HepG2 (cell line): ENCODE measurements at regions of chr5 and their contacts with region 1.

Region 1: DNA sequence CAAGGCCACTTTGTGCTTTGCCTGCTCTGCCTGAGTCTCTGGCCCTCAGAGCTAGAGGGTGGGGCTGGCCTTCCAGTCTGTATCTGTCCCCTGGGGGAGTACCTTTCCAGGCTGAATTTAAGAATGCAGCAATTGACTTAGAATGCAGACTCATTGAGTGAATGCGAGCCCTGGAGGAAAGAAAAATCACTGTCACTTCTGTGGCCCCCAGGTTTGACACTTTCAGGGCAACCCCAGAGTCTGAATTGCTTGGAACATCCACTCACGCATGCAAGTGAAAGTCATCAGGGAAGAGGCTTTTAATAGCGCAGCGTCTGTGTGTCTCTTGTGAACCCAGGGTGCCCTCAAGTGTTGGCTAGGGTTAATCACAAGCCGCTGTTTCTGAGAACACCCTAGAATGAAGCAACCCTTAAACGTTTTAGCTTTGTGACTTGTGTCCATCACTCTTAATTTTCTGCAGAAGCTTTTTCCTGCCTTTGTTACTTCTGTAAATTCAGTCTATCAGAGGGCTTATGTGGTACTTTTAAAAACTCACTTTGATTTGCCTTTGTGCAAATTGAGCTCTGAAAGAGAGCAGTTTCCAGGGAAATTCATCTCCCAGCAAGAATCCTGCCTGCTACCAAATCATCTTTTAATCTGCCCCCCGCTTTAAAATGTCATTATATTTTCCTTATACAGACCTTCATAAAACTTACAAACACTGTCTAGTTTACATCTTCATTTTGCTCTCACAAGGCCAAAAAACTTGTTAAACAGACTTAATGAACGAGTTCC is 146.8 kb upstream of the IQGAP2 start:
- DNase-seq: peak; percentile 63
- ATAC-seq: peak; percentile 98
- H3K4me3 ChIP-seq: no peak overlapping the region
- H3K27ac ChIP-seq: no peak overlapping the region
- H3K4me1 ChIP-seq: no peaks in the 10 kb centered on the region
- H3K27me3 ChIP-seq: peaks cover 1 to 7% of the 10 kb centered on the region in 2 experiments; a peak in 2 of 5 replicates
- CTCF ChIP-seq: peak; percentile 87
- EP300 ChIP-seq: no peak
- POLR2A ChIP-seq: no peak
- RAD21 ChIP-seq: peak; percentile 79; the same call in 1 of the 2 replicates

Region 2: DNA sequence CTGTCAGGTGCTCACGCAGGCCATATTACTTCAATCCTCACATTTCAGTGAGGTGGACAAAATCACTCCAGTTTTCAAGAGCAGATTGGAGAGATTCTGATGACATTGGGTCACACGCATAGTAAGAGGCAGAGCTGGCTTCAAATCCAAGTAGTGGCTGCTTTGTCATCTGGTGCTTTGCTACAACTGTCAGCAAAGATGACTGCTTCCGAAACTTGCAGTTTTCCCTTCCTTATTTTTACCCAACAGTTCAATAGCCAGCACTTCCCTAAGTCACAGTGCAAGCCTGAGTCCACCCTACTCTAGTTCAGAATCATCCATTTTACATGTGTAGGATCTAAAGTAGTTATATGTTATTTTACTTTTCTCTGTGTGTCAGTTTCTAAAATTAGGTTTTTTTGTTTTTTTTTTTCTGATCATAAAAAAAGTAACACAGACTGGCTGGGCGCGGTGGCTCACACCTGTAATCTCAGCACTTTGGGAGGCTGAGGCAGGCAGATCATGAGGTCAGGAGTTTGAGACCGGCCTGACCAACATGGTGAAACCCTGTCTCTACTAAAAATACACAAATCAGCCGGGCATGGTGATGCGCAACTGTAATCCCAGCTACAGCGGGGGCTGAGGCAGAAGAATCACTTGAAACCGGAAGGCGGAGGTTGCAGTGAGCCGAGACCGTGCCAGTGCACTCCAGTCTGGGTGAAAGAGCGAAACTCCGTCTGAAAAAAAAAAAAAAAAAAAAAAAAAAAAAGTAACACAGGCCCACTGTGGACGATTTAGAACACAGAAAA is 595.4 kb before region 1 on chr5:
- CTCF ChIA-PET with region 1: no interaction called
- POLR2A ChIA-PET with region 1: no interaction called
- in situ Hi-C with region 1: no loop called
- intact Hi-C with region 1: no loop called
- DNase-seq: no peak
- ATAC-seq: no peak
- H3K4me3 ChIP-seq: no peak overlapping the region
- H3K27ac ChIP-seq: no peak overlapping the region
- H3K4me1 ChIP-seq: no peaks in the 10 kb centered on the region
- H3K27me3 ChIP-seq: peaks cover 0 to 8% of the 10 kb centered on the region in 2 experiments; a peak in 1 of 5 replicates
- CTCF ChIP-seq: no peak
- EP300 ChIP-seq: no peak
- POLR2A ChIP-seq: no peak
- RAD21 ChIP-seq: no peak

Region 3: DNA sequence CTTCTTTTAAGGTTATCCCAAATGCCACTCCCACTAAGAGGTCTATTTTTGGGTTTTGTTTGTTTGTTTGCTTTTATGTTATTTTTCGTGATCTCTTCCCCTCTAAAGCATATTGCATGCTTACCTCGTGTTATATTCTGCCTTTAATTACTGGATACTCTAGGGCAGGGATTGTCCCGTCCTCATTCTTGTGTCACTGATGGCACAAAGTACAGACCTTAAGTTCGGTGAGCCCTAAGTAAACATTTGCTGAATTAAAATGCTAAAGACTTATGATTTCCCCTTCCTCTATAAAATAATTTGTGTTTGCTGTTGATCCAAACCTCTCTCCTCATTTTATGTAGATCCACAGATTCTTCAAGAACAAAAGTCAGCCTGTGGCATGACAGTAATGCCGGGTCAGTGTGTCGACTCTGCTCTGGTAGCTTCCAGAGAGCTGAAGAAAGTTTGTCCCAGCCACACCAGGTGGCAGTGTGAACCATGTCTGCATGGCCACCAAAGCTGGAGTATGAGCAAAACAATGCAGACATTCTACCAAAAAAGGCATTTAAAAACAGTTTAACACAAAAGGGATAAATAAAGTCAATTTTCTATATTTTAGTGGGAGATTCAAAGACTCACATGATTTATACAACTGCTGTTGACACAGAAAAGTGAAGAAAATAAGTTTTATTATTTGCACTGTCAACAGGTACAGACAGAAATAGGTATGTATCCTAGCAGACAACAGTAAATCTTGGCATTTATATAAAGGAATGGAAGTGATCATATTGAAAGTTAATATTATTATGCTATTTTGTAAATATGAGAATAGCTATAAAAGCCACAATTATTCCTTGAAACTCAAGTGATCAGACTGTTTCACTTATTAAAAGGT is 521.2 kb before region 1 on chr5:
- CTCF ChIA-PET with region 1: interaction called, 5 read pairs
- POLR2A ChIA-PET with region 1: no interaction called
- in situ Hi-C with region 1: loop called (anchors 10 kb)
- intact Hi-C with region 1: loop called (anchors 1 kb)
- DNase-seq: peak; percentile 43
- ATAC-seq: peak; percentile 99
- H3K4me3 ChIP-seq: no peak overlapping the region
- H3K27ac ChIP-seq: no peak overlapping the region
- H3K4me1 ChIP-seq: 0 out of 2 replicates have a peak, but pooled peaks cover 5% of the 10 kb centered on the region
- H3K27me3 ChIP-seq: no peaks in the 10 kb centered on the region
- CTCF ChIP-seq: peak; percentile 82
- EP300 ChIP-seq: no peak
- POLR2A ChIP-seq: no peak
- RAD21 ChIP-seq: peak; percentile 21; the same call in 1 of the 2 replicates

Region 4: DNA sequence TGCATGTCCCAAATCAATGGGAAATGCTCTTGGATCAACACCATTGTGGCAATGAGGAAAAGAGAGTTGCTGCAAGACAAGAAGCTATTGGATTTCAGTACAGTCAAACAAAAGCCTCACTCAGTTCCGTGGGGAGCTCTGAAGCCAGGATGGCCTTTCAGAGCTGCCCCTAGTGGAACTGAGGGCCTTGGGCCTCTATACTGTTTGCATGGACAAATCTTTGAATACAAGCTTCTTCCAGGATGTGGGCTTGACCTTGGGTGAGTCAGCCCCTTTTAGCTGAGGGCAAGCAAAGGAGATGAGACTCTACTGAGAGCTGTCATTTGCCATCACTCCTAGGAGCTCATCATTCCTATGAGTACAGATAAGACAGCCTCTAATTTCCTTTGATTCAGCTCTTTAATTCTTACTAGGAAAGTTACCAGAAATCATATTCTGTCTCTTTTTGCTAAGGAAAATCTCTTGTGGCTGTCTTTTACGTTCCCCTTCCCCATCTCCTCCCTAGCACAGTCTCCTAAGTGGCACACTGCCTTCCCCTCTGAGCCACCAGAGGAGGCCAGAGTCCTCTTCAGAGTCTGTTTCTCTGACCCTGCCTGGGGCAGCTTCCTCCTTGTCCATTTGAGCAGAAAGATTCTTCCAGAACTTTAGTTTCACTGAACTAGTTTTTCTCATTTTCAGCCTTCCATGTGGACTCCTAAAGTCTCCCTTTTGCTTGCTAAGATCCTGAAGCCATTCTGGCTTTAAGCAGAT is 370.3 kb before region 1 on chr5:
- CTCF ChIA-PET with region 1: no interaction called
- POLR2A ChIA-PET with region 1: no interaction called
- in situ Hi-C with region 1: no loop called
- intact Hi-C with region 1: loop called (anchors 5 kb)
- DNase-seq: no peak
- ATAC-seq: peak; percentile 77
- H3K4me3 ChIP-seq: no peak overlapping the region
- H3K27ac ChIP-seq: no peak overlapping the region
- H3K4me1 ChIP-seq: no peaks in the 10 kb centered on the region
- H3K27me3 ChIP-seq: no peaks in the 10 kb centered on the region
- CTCF ChIP-seq: peak; percentile 62
- EP300 ChIP-seq: no peak
- POLR2A ChIP-seq: no peak
- RAD21 ChIP-seq: no peak

Region 5: GRCh38 chr5:76016258-76016657 is 240.0 kb before region 1 on chr5:
- CTCF ChIA-PET with region 1: no interaction called
- POLR2A ChIA-PET with region 1: no interaction called
- in situ Hi-C with region 1: no loop called
- intact Hi-C with region 1: loop called (anchors 1 kb)
- DNase-seq: no peak
- ATAC-seq: no peak
- H3K4me3 ChIP-seq: no peak overlapping the region
- H3K27ac ChIP-seq: no peak overlapping the region
- H3K4me1 ChIP-seq: no peaks in the 10 kb centered on the region
- H3K27me3 ChIP-seq: peaks cover 0 to 5% of the 10 kb centered on the region in 2 experiments; a peak in 1 of 5 replicates
- CTCF ChIP-seq: 0 out of 2 replicates have a peak, but pooled peaks have one; percentile 17
- EP300 ChIP-seq: no peak
- POLR2A ChIP-seq: no peak
- RAD21 ChIP-seq: no peak

Region 6: DNA sequence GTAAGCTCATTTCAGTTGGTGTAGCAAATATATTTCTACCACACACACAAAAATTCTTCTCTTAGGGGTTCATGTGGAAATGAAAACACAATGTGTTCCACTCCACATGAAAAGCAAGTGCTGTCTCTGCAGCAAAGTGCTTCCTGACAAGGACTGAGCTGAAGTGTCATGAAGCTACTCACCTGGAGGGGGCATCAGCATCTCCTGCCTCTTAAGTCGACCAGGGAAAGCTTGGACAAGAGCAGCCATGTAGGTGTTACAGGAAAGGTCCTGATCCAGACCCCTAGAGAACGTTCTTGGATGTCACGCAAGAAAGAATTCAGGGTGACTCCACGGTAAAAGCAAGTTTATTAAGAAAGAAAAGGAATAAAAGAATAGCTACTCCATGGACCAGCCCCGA is 110.4 kb before region 1 on chr5:
- CTCF ChIA-PET with region 1: interaction called, 3 read pairs
- POLR2A ChIA-PET with region 1: no interaction called
- in situ Hi-C with region 1: no loop called
- intact Hi-C with region 1: loop called (anchors 2 kb)
- DNase-seq: peak; percentile 16
- ATAC-seq: peak; percentile 80
- H3K4me3 ChIP-seq: no peak overlapping the region
- H3K27ac ChIP-seq: no peak overlapping the region
- H3K4me1 ChIP-seq: no peaks in the 10 kb centered on the region
- H3K27me3 ChIP-seq: no peaks in the 10 kb centered on the region
- CTCF ChIP-seq: peak; percentile 56
- EP300 ChIP-seq: no peak
- POLR2A ChIP-seq: no peak
- RAD21 ChIP-seq: no peak